Activated naive CD4-positive, alpha-beta T cell treated with anti-CD3 and anti-CD28 coated beads, Interleukin-2, amount 10 ng/mL, durations not matched to agents 7 days and 5 days (primary cell): ENCODE measurements at regions of chr12 and their contacts with region 1.

Region 1: GRCh38 chr12:121483949-121484348 is 84.0 kb downstream of the RNF34 start:
- DNase-seq: no peak
- H3K4me3 Mint-ChIP-seq: no peak overlapping the region
- H3K27ac Mint-ChIP-seq: no peak overlapping the region
- H3K4me1 Mint-ChIP-seq: no peaks in the 10 kb centered on the region
- H3K27me3 Mint-ChIP-seq: no peaks in the 10 kb centered on the region

Region 2: DNA sequence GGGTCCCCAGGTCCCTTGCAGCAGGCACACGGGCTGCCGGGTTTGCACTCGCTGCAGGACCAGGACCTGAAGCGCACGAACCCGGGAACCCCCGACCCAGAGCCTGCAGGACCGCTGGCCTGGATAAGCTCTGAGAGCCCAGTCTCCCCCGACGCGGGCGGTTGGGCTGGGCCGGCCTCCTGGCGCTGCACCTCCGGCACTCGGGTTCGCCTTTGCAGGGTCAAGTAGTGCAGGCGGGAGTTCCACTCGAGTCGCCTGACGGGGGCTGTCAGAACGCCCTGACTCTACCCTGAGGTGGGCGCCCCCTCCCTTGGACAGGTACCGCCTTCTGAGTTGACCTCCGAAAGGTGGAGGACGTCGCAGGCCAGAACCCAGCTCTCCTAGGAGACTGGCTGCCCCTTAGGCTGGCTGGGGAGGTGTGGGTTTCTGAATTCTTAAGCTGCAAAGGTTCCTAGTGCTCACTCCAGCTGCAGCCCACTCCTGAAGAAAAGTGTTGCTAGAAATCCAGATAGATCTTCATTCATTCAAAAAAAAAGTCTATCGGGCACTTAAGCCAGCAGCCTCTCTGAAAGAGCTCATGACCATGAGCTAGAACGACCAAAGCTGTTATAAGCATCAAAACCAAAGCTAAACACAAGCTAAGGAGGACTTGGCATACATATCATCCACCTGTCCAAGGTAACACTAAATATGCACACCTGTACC is 16.0 kb before region 1 on chr12:
- CTCF ChIA-PET with region 1: interaction called, 16 read pairs
- DNase-seq: no peak
- H3K4me3 Mint-ChIP-seq: peak overlapping the region; percentile 46
- H3K27ac Mint-ChIP-seq: peak overlapping the region; percentile 28
- H3K4me1 Mint-ChIP-seq: peaks cover 34% of the 10 kb centered on the region
- H3K27me3 Mint-ChIP-seq: peaks cover 4% of the 10 kb centered on the region

Region 3: DNA sequence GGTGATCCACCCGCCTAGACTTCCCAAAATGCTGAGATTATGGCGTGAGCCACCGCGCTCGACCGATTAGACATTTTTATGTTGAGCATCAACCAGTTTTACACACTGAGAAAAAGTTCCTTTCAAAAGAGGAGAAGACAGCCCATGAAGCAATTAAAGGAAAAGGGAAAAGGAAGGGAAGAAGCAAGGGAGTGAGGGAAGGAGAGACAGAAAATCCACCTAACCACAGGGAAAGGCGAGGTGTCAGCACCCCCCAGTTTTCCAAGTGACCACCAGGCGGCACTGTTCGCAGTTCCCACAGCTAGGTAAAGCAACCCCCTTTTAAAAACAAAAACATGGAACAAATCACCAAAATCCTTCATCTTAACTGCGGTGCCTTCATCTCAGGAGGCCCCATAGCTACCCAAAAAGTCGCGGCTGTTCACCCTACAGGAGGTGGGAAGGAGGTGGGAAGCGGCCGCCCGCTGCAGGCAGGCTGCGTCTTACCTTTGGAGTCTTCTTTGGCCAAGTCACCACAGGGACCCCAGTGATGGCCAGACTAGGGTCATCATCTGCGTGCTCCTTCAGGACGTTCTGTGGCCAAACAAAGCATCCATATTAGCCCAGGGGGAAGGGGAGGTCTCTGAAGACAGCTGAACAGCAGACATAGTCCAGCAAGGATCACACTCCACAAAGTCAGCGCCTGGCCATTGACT is 10.3 kb after region 1 on chr12:
- CTCF ChIA-PET with region 1: interaction called, 17 read pairs
- DNase-seq: peak; percentile 74
- H3K4me3 Mint-ChIP-seq: no peak overlapping the region
- H3K27ac Mint-ChIP-seq: no peak overlapping the region
- H3K4me1 Mint-ChIP-seq: peaks cover 16% of the 10 kb centered on the region
- H3K27me3 Mint-ChIP-seq: no peaks in the 10 kb centered on the region